ENCODE measurements at regions of chr1 and their contacts with region 1.

Region 1: DNA sequence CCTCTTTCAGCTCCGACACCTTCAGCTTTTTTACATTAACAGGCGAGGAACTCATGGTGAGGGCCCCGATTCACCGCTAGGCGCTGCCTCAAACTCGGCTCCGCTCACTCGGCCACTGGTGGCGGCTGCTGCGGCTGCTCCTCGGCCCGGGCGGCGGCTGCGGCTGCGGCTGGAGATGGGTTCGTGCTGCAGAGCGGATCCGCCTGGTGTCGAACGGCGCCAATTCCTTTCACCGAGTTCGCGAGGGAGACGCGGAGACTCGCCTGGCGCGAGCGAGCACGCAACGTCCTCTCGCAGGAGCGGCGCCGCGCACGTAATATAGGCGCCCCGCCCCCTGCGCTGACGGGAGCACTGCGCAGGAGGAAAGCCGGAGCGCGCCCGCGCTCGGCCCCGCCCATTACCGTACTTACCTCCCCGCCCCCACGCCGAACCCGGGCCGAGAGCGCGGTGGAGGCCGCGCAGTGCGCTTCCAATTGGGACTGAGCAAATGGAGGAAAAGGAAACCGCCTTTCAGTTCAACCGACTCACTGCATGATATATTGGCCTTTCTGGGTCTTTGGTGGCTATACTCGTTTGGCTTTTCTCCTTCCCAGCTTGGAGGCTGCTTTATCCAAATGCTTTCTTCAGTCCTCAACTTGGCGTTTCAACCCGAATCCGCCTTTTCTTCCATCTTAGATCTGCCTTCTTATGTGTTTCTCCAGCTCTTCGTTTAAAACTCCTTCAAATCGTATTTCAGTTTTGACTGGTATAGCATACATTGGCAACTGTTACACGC is at the start of gene HNRNPU:
- DNase-seq: peak; percentile 91 to 99 (median 96)
- ATAC-seq: peak; percentile 63
- H3K4me3 ChIP-seq: peak within 1 kb of the TSS; percentile 85 to 88
- H3K4me3 Mint-ChIP-seq: peak within 1 kb of the TSS; percentile 94
- H3K27ac ChIP-seq: peak within 1 kb of the TSS; percentile 91 to 94
- H3K27ac Mint-ChIP-seq: peak within 1 kb of the TSS; percentile 98
- H3K4me1 ChIP-seq: peaks cover 34% of the 10 kb centered on the region
- H3K4me1 Mint-ChIP-seq: peaks cover 45% of the 10 kb centered on the region
- H3K27me3 ChIP-seq: no peaks in the 10 kb centered on the region
- H3K27me3 Mint-ChIP-seq: no peaks in the 10 kb centered on the region
- CTCF ChIP-seq: no peak
- total RNA-seq, gene HNRNPU: 411 to 415 TPM

Region 2: GRCh38 chr1:244256086-244256676 is 608.3 kb before region 1 on chr1:
- CTCF ChIA-PET with region 1: no interaction called
- POLR2A ChIA-PET with region 1: no interaction called
- intact Hi-C with region 1: no loop called
- DNase-seq: no peak
- ATAC-seq: no peak
- H3K4me3 ChIP-seq: no peak overlapping the region
- H3K4me3 Mint-ChIP-seq: no peak overlapping the region
- H3K27ac ChIP-seq: no peak overlapping the region
- H3K27ac Mint-ChIP-seq: no peak overlapping the region
- H3K4me1 ChIP-seq: no peaks in the 10 kb centered on the region
- H3K4me1 Mint-ChIP-seq: peaks cover 2% of the 10 kb centered on the region
- H3K27me3 ChIP-seq: no peaks in the 10 kb centered on the region
- H3K27me3 Mint-ChIP-seq: peaks cover 6% of the 10 kb centered on the region
- CTCF ChIP-seq: no peak

Region 3: GRCh38 chr1:244451951-244452795 is 412.3 kb before region 1 on chr1:
- CTCF ChIA-PET with region 1: no interaction called
- POLR2A ChIA-PET with region 1: interaction called, 5 read pairs
- intact Hi-C with region 1: loop called (anchors 1 to 2 kb)
- DNase-seq: peak; percentile 97 to 100 (median 99)
- ATAC-seq: peak; percentile 83
- H3K4me3 ChIP-seq: peak overlapping the region; percentile 78 to 95
- H3K4me3 Mint-ChIP-seq: peak overlapping the region; percentile 91
- H3K27ac ChIP-seq: peak overlapping the region; percentile 95 to 96
- H3K27ac Mint-ChIP-seq: peak overlapping the region; percentile 97
- H3K4me1 ChIP-seq: peaks cover 32% of the 10 kb centered on the region
- H3K4me1 Mint-ChIP-seq: peaks cover 45% of the 10 kb centered on the region
- H3K27me3 ChIP-seq: no peaks in the 10 kb centered on the region
- H3K27me3 Mint-ChIP-seq: no peaks in the 10 kb centered on the region
- CTCF ChIP-seq: peak; percentile 55

Region 4: GRCh38 chr1:244849189-244849866 is 15.1 kb before region 1 on chr1:
- CTCF ChIA-PET with region 1: interaction called, 4 read pairs
- POLR2A ChIA-PET with region 1: interaction called, 762 read pairs
- intact Hi-C with region 1: loop called in 1 of 2 experiments (anchors 1 kb)
- DNase-seq: no peak
- ATAC-seq: no peak
- H3K4me3 ChIP-seq: no peak overlapping the region
- H3K4me3 Mint-ChIP-seq: no peak overlapping the region
- H3K27ac ChIP-seq: no peak overlapping the region
- H3K27ac Mint-ChIP-seq: peak overlapping the region; percentile 2
- H3K4me1 ChIP-seq: peaks cover 50% of the 10 kb centered on the region
- H3K4me1 Mint-ChIP-seq: peaks cover 70% of the 10 kb centered on the region
- H3K27me3 ChIP-seq: no peaks in the 10 kb centered on the region
- H3K27me3 Mint-ChIP-seq: no peaks in the 10 kb centered on the region
- CTCF ChIP-seq: no peak

Region 5: DNA sequence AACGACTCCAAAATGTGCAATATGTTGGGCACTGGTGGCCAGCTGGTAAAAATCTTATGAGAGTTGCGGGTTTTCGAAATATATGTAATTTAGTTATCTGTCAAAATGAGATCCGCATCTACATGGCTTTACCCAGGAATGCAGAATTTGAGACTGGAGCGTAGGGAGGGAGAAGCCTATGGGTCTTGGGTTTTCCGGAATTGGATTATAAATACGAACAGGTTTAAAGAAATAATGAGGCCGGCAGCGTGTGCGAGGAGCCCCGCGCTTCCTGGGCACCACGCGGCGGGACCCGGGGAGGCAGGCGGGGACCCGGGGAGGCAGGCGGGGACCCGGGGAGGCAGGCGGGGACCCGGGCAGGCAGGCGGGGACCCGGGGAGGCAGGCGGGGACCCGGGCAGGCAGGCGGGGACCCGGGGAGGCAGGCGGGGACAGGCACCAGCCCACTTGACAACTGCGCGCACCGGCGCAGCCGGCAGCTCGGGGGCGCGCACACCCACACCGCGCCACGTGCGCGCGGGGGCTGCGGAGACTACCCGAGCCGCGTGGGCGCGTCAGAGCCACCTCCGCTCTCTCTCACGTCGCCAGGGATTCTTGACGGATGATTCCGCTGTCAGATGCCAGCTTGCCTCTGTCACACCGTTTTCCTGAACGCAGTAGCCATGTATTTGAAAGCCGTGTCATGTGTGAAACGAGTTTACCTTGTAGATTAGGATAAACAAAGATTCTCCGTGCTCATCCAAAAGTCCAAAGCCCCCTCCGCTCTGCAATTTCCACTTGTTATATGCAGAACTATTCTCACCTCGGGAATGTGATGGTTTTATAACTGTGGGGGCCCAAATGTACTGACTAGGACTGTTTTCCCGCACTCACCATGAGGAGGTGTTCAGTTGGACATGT is 54.2 kb after region 1 on chr1:
- CTCF ChIA-PET with region 1: interaction called, 4 read pairs
- POLR2A ChIA-PET with region 1: interaction called, 34 read pairs
- intact Hi-C with region 1: loop called (anchors 1 kb)
- DNase-seq: peak; percentile 36 to 91 (median 68)
- ATAC-seq: peak; percentile 96
- H3K4me3 ChIP-seq: peak overlapping the region; percentile 55
- H3K4me3 Mint-ChIP-seq: peak overlapping the region; percentile 86
- H3K27ac ChIP-seq: peak overlapping the region in 1 of 2 experiments; percentile 33
- H3K27ac Mint-ChIP-seq: peak overlapping the region; percentile 64
- H3K4me1 ChIP-seq: peaks cover 6% of the 10 kb centered on the region
- H3K4me1 Mint-ChIP-seq: peaks cover 11% of the 10 kb centered on the region
- H3K27me3 ChIP-seq: no peaks in the 10 kb centered on the region
- H3K27me3 Mint-ChIP-seq: no peaks in the 10 kb centered on the region
- CTCF ChIP-seq: no peak

Region 6: GRCh38 chr1:244964112-244964971 is 99.9 kb after region 1 on chr1:
- CTCF ChIA-PET with region 1: interaction called, 6 read pairs
- POLR2A ChIA-PET with region 1: interaction called, 139 read pairs
- intact Hi-C with region 1: no loop called
- DNase-seq: peak in 4 of 9 experiments; percentile 19 to 63 (median 36)
- ATAC-seq: no peak
- H3K4me3 ChIP-seq: no peak overlapping the region
- H3K4me3 Mint-ChIP-seq: no peak overlapping the region
- H3K27ac ChIP-seq: no peak overlapping the region
- H3K27ac Mint-ChIP-seq: no peak overlapping the region
- H3K4me1 ChIP-seq: peaks cover 17% of the 10 kb centered on the region
- H3K4me1 Mint-ChIP-seq: peaks cover 18% of the 10 kb centered on the region
- H3K27me3 ChIP-seq: no peaks in the 10 kb centered on the region
- H3K27me3 Mint-ChIP-seq: no peaks in the 10 kb centered on the region
- CTCF ChIP-seq: no peak

Measured in CD8-positive, alpha-beta T cell (primary cell).